Left colon (tissue), 2 donors: ENCODE measurements at regions of chr2 and their contacts with region 1.

Region 1: GRCh38 chr2:106098081-106098480 is 96.0 kb downstream of the UXS1 start:
- DNase-seq: no peak
- ATAC-seq: no peak

Region 2: GRCh38 chr2:105576440-105577252 is 521.4 kb before region 1 on chr2:
- intact Hi-C with region 1: loop called in 1 of 2 experiments (anchors 10 kb)
- DNase-seq: peak in 1 of 2 donors; percentile 24
- ATAC-seq: peak; percentile 65

Region 3: DNA sequence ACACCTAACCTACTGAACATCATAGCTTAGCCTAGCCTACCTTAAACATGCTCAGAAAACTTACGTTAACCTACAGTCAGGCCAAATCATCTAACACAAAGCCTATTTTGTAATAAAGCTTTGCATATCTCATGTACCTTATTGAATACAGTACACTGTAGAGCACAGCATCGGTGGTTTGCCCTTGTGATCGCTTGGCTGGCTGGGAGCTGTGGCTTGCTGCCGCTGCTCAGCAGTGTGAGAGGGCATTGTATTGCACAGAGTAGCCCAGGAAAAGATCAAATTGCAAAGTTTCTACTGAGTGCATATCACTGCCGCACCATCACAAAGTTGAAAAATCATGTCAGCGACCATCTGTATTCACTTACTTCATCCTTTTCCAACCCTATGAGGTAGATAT is 415.7 kb before region 1 on chr2:
- intact Hi-C with region 1: no loop called
- DNase-seq: no peak
- ATAC-seq: no peak

Region 4: GRCh38 chr2:106160786-106161261 is 62.7 kb after region 1 on chr2:
- intact Hi-C with region 1: no loop called
- DNase-seq: no peak
- ATAC-seq: no peak